ENCODE measurements at regions of chr10 and their contacts with region 1.

Region 1: GRCh38 chr10:115948465-115948864 is 324.5 kb downstream of the GFRA1 start:
- DNase-seq: peak in 2 of 5 donors; percentile 31 to 58
- H3K4me3 ChIP-seq: no peak overlapping the region
- H3K27ac ChIP-seq: no peak overlapping the region
- H3K4me1 ChIP-seq: no peaks in the 10 kb centered on the region
- H3K27me3 ChIP-seq: no peaks in the 10 kb centered on the region
- CTCF ChIP-seq: no peak

Region 2: DNA sequence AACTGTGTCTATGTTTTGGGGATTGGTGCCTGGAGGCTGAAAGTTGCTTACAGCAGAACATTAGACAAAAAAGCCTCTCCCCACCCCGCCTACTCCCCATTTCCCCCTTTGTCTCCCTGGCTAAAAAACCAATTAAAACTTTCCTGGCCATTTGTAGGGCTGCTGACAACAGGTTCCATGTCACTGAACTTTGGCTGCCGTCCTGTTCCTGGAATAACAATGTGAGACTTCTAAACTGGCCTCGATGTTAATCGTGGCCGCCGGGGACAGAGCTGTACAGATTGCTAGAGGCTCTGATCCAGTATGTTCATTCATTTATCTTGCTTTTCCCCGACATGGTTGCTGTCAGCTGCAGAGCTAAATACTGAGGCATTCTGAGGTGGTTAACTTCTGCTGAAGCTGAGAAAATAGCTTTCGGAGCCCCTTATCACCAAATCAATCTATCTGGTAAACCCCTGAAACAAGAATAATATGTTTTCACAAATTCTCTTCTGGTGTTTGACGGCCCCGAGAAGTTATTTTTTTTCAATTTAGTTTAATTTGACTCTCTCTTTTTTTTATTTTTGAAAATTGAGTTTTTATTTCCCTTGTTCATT is 52.9 kb after region 1 on chr10:
- intact Hi-C with region 1: no loop called
- DNase-seq: peak in 4 of 5 donors; percentile 54 to 81 (median 66)
- H3K4me3 ChIP-seq: no peak overlapping the region
- H3K27ac ChIP-seq: no peak overlapping the region
- H3K4me1 ChIP-seq: no peaks in the 10 kb centered on the region
- H3K27me3 ChIP-seq: no peaks in the 10 kb centered on the region
- CTCF ChIP-seq: no peak

Region 3: GRCh38 chr10:116272440-116273283 is 324.2 kb after region 1 on chr10 and contains the start of gene GFRA1:
- intact Hi-C with region 1: loop called (anchors 10 kb)
- DNase-seq: peak in 4 of 5 donors; percentile 56 to 85 (median 68)
- H3K4me3 ChIP-seq: peak within 1 kb of the TSS; percentile 44 to 86 (median 55)
- H3K27ac ChIP-seq: peak within 1 kb of the TSS in 1 of 2 donors; percentile 30
- H3K4me1 ChIP-seq: peaks cover 0 to 9% (median 0%) of the 10 kb centered on the region in 3 donors
- H3K27me3 ChIP-seq: peaks cover 3% of the 10 kb centered on the region
- CTCF ChIP-seq: no peak
- total RNA-seq, gene GFRA1: 22.3 TPM